ENCODE measurements at regions of chr10 and their contacts with region 1.

Region 1: DNA sequence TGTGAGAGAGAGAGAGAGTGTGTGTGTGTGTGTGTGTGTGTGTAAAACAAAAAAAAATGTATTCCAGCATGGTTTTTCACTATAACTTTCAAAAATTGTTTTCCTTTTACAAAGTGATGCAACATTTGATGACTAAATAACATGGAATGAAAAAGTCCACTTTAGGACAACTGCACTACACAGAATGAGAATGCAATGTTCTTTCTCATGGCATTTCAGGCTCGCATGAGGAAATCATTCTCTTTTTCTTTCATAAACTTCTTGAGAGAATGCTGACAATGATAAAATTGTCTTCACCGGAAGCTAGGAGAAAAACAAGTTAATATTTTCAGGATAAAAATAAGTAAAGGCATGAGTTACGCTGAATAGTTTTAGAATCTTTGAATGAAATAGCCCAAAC is 53.7 kb downstream of the SLC16A12 start:
- DNase-seq: peak; percentile 86
- H3K4me3 Mint-ChIP-seq: peak overlapping the region; percentile 28
- H3K27ac Mint-ChIP-seq: peak overlapping the region; percentile 99
- H3K4me1 Mint-ChIP-seq: peaks cover 52% of the 10 kb centered on the region
- H3K27me3 Mint-ChIP-seq: no peaks in the 10 kb centered on the region
- CTCF ChIP-seq: no peak

Region 2: DNA sequence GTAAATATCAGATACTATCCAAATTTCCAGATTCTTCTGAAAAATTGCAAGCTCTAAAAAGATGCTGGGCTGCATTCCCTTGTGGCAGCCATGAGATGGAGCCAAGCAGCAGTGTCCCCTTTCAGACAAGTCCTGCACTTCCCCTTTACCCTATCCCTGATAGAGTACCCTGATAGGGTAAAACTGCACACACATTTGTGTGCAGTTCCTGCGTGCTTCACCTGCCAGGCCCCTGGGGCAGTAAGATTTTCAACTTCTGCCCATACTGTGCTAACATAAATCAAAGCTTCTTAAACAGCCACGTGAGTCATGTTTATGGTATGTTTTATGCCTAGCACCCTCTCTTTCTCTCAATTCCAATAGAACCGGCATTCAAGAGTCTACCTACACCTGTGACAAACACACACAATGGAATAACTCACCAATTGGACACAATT is 15.0 kb before region 1 on chr10:
- CTCF ChIA-PET with region 1: interaction called, 7 read pairs
- POLR2A ChIA-PET with region 1: interaction called, 30 read pairs
- intact Hi-C with region 1: no loop called
- DNase-seq: peak; percentile 77
- H3K4me3 Mint-ChIP-seq: no peak overlapping the region
- H3K27ac Mint-ChIP-seq: peak overlapping the region; percentile 68
- H3K4me1 Mint-ChIP-seq: peaks cover 37% of the 10 kb centered on the region
- H3K27me3 Mint-ChIP-seq: no peaks in the 10 kb centered on the region
- CTCF ChIP-seq: peak; percentile 43

Measured in MCF 10A (cell line).